Activated CD4-positive, alpha-beta memory T cell treated with anti-CD3 and anti-CD28 coated beads for 36 hours (primary cell): ENCODE measurements at regions of chr21 and their contacts with region 1.

Region 1: GRCh38 chr21:34707876-34708325 is 39.1 kb downstream of the CLIC6 start:
- DNase-seq: peak; percentile 85
- H3K4me3 Mint-ChIP-seq: no peak overlapping the region
- H3K27ac Mint-ChIP-seq: peak overlapping the region; percentile 15
- H3K4me1 Mint-ChIP-seq: peaks cover 20% of the 10 kb centered on the region
- H3K27me3 Mint-ChIP-seq: peaks cover 41% of the 10 kb centered on the region

Region 2: DNA sequence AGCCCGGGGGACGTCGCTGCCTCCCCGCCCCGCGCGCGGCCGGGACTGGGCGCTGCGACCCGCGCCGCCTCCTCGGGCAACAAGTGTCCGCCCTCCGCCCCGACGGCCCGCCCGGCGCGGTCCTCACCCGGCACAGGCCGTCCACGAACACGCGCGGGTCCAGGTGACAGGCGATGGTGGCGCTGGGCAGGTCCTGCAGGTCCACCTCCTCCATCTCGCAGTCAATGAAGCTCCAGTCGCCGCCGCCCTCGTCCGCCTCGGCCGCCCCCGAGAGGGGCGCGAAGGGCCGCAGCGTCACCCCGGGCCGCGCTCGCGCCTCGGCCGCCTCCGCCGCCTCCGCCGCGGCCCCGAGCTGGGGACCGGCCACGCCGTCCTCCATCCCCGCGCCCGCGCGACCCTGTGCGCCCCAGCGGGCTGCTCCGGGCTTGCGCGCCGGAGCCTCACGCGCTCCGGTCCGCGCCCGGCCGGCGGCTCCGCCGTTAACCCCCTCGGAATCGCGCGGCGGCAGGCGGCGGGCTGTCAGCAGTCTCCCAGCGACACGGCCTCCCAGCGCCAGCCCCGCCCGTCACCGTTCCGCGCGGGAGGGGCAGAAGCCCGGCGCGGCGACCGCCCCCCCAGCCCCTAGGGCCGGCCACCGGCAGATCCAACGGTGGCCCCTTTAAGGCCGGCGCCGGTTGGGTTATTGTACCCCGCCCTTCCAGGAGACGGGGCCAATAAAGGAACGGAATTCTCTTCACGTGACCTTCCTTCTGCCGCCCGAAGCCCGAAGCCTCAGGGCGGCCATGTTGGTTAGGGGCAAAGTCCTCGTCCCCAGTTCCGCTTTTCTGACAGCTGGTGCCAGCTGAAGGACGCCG is 93.0 kb before region 1 on chr21 and contains the start of gene RCAN1:
- CTCF ChIA-PET with region 1: no interaction called
- POLR2A ChIA-PET with region 1: no interaction called
- intact Hi-C with region 1: no loop called
- DNase-seq: peak; percentile 92
- H3K4me3 Mint-ChIP-seq: peak within 1 kb of the TSS; percentile 79
- H3K27ac Mint-ChIP-seq: peak within 1 kb of the TSS; percentile 69
- H3K4me1 Mint-ChIP-seq: peaks cover 15% of the 10 kb centered on the region
- H3K27me3 Mint-ChIP-seq: no peaks in the 10 kb centered on the region
- total RNA-seq, gene RCAN1: 8.6 to 9.7 TPM

Region 3: GRCh38 chr21:34722684-34723300 is 14.9 kb after region 1 on chr21:
- CTCF ChIA-PET with region 1: interaction called, 21 read pairs
- POLR2A ChIA-PET with region 1: no interaction called
- intact Hi-C with region 1: no loop called
- DNase-seq: peak; percentile 37
- H3K4me3 Mint-ChIP-seq: no peak overlapping the region
- H3K27ac Mint-ChIP-seq: no peak overlapping the region
- H3K4me1 Mint-ChIP-seq: no peaks in the 10 kb centered on the region
- H3K27me3 Mint-ChIP-seq: peaks cover 12% of the 10 kb centered on the region